Endothelial cell of umbilical vein (primary cell): ENCODE measurements at regions of chr3 and their contacts with region 1.

Region 1: DNA sequence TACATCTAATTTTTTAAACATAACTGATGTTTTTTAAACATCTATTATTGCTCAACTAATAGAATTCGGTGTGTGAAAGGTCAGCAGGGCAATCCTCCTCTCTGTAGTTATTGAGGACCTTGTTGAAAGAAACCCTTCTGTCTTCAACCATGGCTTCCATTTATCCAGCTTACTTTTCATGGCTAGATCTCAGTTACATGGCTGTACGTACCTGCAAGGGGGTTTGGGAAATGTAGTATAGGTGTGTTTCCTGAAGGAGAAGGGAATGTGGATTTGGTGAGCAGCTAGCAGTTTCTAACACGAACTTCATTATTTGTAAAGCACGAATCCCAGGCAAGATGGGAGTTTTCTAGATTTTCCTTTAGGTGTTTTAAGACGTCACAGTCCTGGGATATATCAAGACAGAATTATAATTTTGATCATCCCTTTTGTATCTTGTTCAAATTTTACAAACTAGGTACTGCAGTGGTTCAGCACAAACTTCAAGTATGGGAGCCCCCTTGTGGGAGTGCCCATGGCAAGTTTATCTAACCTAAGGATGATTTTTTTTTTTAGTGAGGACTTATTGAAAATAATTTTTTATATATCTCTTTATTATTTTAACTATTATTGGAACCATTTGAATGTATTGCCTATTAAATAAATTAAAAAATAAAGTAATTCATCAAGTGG is 41.6 kb downstream of the FBXL2 start:
- DNase-seq: peak; percentile 60
- H3K4me3 ChIP-seq: no peak overlapping the region
- H3K27ac ChIP-seq: peak overlapping the region; percentile 85
- H3K4me1 ChIP-seq: peaks cover 58% of the 10 kb centered on the region
- H3K27me3 ChIP-seq: no peaks in the 10 kb centered on the region
- CTCF ChIP-seq: peak; percentile 12 to 15
- POLR2A ChIP-seq: no peak

Region 2: GRCh38 chr3:33131331-33132018 is 187.4 kb before region 1 on chr3:
- CTCF ChIA-PET with region 1: interaction called, 44 read pairs
- POLR2A ChIA-PET with region 1: no interaction called
- dilution Hi-C with region 1: no loop called
- intact Hi-C with region 1: loop called (anchors 1 kb)
- DNase-seq: peak; percentile 76
- H3K4me3 ChIP-seq: no peak overlapping the region
- H3K27ac ChIP-seq: no peak overlapping the region
- H3K4me1 ChIP-seq: peaks cover 9% of the 10 kb centered on the region
- H3K27me3 ChIP-seq: no peaks in the 10 kb centered on the region
- CTCF ChIP-seq: peak; percentile 51 to 62
- POLR2A ChIP-seq: no peak

Region 3: GRCh38 chr3:33211444-33211843 is 107.4 kb before region 1 on chr3:
- CTCF ChIA-PET with region 1: no interaction called
- POLR2A ChIA-PET with region 1: no interaction called
- dilution Hi-C with region 1: no loop called
- intact Hi-C with region 1: loop called (anchors 2 kb)
- DNase-seq: peak; percentile 96
- H3K4me3 ChIP-seq: no peak overlapping the region
- H3K27ac ChIP-seq: peak overlapping the region; percentile 50
- H3K4me1 ChIP-seq: peaks cover 12% of the 10 kb centered on the region
- H3K27me3 ChIP-seq: no peaks in the 10 kb centered on the region
- CTCF ChIP-seq: no peak
- POLR2A ChIP-seq: no peak

Region 4: DNA sequence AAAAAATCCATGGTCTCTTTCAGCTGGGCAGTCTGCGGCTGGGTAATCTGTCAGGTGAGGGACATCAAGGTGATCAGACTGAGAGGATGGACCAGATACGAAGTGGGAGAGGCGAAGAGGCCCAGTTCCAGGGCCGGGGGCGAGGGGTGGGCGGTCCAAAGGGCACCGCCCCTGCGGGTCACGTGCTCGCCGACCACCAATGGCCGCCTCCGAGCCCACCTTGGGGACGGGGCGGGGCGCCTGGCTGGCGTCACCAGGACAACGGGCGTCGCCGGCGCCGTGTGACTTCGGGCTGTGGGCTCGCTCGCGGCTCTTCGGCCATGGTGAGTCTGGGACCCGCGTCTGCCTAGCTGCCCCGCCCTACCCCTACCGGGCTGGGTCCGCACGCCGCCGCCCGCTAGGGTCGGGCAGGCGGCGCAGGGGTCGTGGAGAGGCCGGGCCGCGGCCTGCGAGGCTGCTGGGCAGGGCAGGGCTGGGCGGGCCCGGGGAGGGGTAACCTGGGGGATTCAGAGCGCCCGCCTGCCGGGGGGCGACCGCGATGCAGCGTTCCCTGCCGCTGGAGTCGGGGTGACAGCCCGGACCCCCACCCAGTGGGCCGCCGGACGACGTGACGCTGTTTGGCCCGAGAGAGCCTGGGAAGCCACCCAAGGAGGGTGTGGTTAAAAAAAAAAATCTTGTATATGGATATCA is 41.5 kb before region 1 on chr3 and contains the start of gene FBXL2:
- CTCF ChIA-PET with region 1: interaction called, 11 read pairs
- POLR2A ChIA-PET with region 1: no interaction called
- dilution Hi-C with region 1: no loop called
- intact Hi-C with region 1: loop called (anchors 1 kb)
- DNase-seq: peak; percentile 73
- H3K4me3 ChIP-seq: peak within 1 kb of the TSS; percentile 66 to 93 (median 81)
- H3K27ac ChIP-seq: peak within 1 kb of the TSS; percentile 44
- H3K4me1 ChIP-seq: peaks cover 11% of the 10 kb centered on the region
- H3K27me3 ChIP-seq: no peaks in the 10 kb centered on the region
- CTCF ChIP-seq: no peak
- POLR2A ChIP-seq: peak; percentile 68
- total RNA-seq, gene FBXL2: 21.7 and 26.9 TPM in 2 replicates

Region 5: DNA sequence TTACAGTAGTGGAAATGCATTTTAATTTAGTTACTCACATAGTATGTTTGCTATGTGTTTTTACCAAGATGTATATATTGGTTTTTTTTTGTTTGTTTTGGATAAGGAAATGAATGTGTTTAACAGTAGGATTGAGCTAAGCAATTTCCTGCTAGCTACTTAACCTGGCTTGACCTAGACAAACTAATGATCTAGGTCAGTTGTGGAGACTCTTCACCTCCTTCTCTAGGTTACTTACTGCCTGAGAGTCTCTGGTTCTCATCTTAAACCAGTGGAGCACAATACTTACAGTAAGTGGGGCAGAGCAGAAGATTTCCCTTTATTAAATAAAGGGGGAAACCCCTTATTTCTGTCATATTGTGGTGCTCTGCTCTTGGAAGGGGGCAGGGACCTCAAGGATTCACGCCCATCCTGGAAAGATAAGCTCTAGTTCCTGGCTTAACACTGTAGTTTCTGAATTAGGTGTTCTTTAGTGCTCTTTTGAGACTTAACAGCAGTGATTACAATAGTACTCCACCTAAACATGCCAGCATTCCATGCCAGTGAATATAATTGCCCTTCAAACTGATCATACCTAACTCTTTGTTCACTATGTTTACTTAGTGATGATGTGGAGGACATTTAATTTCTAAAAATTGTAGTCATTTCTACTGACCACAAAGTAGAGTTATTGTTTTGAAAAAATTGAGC is 41.4 kb after region 1 on chr3:
- CTCF ChIA-PET with region 1: interaction called, 4 read pairs
- POLR2A ChIA-PET with region 1: no interaction called
- dilution Hi-C with region 1: no loop called
- intact Hi-C with region 1: loop called (anchors 2 kb)
- DNase-seq: peak; percentile 63
- H3K4me3 ChIP-seq: no peak overlapping the region
- H3K27ac ChIP-seq: peak overlapping the region; percentile 75
- H3K4me1 ChIP-seq: peaks cover 18% of the 10 kb centered on the region
- H3K27me3 ChIP-seq: no peaks in the 10 kb centered on the region
- CTCF ChIP-seq: no peak
- POLR2A ChIP-seq: no peak